ENCODE measurements at regions of chr9 and their contacts with region 1.

Region 1: GRCh38 chr9:127916665-127917613 is at the start of gene ST6GALNAC4:
- DNase-seq: peak; percentile 93 to 96
- ATAC-seq: peak; percentile 97 to 99 (median 98)
- H3K4me3 ChIP-seq: peak within 1 kb of the TSS; percentile 84
- H3K4me3 Mint-ChIP-seq: peak within 1 kb of the TSS; percentile 79
- H3K27ac ChIP-seq: peak within 1 kb of the TSS; percentile 76
- H3K27ac Mint-ChIP-seq: peak within 1 kb of the TSS in 1 of 2 donors; percentile 74
- H3K4me1 ChIP-seq: peaks cover 62% of the 10 kb centered on the region
- H3K4me1 Mint-ChIP-seq: peaks cover 15 to 40% of the 10 kb centered on the region in 2 donors
- H3K27me3 ChIP-seq: no peaks in the 10 kb centered on the region
- H3K27me3 Mint-ChIP-seq: no peaks in the 10 kb centered on the region
- CTCF ChIP-seq: no peak
- total RNA-seq, gene ST6GALNAC4: 18.8 to 33.0 (median 20.4) TPM

Region 2: GRCh38 chr9:127224178-127224882 is 692.6 kb before region 1 on chr9:
- intact Hi-C with region 1: loop called (anchors 10 kb)
- DNase-seq: peak; percentile 88 to 90
- ATAC-seq: peak; percentile 75 to 88 (median 77)
- H3K4me3 ChIP-seq: peak overlapping the region; percentile 65
- H3K4me3 Mint-ChIP-seq: peak overlapping the region; percentile 88
- H3K27ac ChIP-seq: peak overlapping the region; percentile 55
- H3K27ac Mint-ChIP-seq: peak overlapping the region; percentile 81 to 98
- H3K4me1 ChIP-seq: peaks cover 22% of the 10 kb centered on the region
- H3K4me1 Mint-ChIP-seq: peaks cover 15 to 32% of the 10 kb centered on the region in 2 donors
- H3K27me3 ChIP-seq: peaks cover 2% of the 10 kb centered on the region
- H3K27me3 Mint-ChIP-seq: peaks cover 6 to 14% of the 10 kb centered on the region in 2 donors
- CTCF ChIP-seq: no peak

Region 3: DNA sequence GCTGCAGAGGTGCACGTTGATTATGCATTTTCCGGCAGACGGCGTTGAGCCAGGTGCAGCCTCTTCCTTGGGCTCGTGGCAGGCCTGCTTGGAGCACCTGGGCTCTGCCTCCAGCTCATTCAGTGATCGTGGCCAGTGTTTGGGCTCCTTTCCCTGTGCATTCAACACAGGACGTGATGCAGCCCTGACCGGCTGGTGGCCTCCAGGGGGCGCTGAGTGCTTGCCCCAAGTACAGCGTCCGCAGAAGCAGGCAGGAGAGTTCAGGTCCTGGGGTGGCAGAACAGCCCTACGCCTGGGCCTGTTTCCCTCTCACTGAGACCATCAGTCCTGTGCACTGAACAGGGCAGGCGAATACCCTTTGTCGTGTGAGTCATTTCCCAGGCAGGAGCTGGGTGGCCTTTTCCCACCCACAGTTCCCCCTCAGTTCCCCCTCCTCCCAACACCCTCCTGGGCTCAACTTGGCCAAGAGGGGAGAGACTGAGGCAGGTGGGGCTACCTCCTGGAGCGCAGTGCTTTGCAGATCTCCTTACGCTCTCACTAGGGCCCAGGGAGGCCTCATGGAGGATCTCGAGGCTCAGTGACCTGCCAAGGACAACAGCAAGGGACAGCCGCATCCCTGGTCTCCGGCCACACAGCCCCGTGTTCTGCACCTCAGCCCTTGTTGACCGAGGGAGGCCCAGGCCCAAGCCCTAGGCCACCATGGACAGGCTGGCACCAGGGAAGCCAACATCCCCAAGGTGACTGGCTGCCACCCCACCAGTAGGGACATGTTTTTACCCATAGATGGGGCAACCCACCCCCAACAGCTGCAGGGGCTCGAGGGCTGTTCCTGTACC is 412.8 kb before region 1 on chr9:
- intact Hi-C with region 1: loop called (anchors 1 kb)
- DNase-seq: peak; percentile 78 to 89
- ATAC-seq: peak; percentile 76 to 98 (median 88)
- H3K4me3 ChIP-seq: no peak overlapping the region
- H3K4me3 Mint-ChIP-seq: no peak overlapping the region
- H3K27ac ChIP-seq: no peak overlapping the region
- H3K27ac Mint-ChIP-seq: no peak overlapping the region
- H3K4me1 ChIP-seq: no peaks in the 10 kb centered on the region
- H3K4me1 Mint-ChIP-seq: no peaks in the 10 kb centered on the region
- H3K27me3 ChIP-seq: no peaks in the 10 kb centered on the region
- H3K27me3 Mint-ChIP-seq: no peaks in the 10 kb centered on the region
- CTCF ChIP-seq: peak; percentile 79

Region 4: GRCh38 chr9:127802576-127803443 is 114.1 kb before region 1 on chr9 and contains the start of gene FPGS:
- intact Hi-C with region 1: loop called (anchors 2 kb)
- DNase-seq: peak; percentile 78 to 92
- ATAC-seq: peak; percentile 81 to 95 (median 86)
- H3K4me3 ChIP-seq: peak within 1 kb of the TSS; percentile 97
- H3K4me3 Mint-ChIP-seq: peak within 1 kb of the TSS; percentile 91
- H3K27ac ChIP-seq: peak within 1 kb of the TSS; percentile 90
- H3K27ac Mint-ChIP-seq: peak within 1 kb of the TSS; percentile 84 to 94
- H3K4me1 ChIP-seq: peaks cover 29% of the 10 kb centered on the region
- H3K4me1 Mint-ChIP-seq: peaks cover 18 to 30% of the 10 kb centered on the region in 2 donors
- H3K27me3 ChIP-seq: no peaks in the 10 kb centered on the region
- H3K27me3 Mint-ChIP-seq: no peaks in the 10 kb centered on the region
- CTCF ChIP-seq: no peak
- total RNA-seq, gene FPGS: 99.1 to 108 (median 107) TPM

Region 5: DNA sequence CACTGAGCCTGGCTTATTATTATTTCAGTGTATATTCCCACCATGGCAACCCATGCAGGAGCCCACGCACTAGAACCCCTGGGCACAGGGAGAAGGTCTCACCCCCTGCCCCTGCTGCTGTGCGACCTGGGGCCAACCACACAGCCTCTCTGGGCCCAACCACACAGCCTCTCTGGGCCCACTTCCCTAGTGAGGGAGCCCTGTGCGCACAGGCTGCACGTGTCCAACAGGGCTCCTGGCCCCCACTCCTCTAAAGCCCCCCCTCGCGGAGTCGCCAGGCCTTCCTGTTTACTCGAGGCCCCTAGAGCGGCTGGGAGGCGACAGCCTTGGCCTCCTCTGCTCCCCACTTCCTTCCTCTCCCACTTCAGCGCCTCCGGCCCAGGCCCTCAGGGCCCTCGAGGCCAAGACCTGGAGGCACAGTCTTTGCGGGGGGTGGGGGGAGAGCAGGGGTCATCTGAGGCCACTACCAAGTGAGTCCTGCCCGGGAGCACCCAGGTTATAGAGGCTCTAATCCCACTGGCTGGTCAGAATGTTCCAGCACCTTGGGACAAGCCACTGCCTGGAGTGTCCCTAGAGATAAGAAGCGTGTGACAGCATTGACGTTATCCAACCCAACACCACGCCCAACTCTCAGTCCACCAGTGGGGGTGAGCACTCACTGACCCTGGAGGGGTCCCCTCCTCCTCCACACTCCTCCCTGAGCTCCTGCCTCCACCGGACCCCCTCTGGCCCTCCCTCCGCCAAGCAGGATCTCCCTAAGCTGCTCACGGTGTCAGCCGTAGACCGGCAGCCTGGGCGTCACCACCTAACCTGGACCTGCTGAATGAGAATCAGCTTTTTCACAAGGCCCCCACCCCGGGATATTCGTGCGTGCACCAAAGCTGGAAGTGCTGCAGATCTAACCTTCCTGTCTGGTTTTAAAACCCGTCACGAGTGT is 54.6 kb before region 1 on chr9:
- intact Hi-C with region 1: loop called (anchors 5 kb)
- DNase-seq: peak; percentile 63 to 68
- ATAC-seq: peak; percentile 78 to 93 (median 82)
- H3K4me3 ChIP-seq: no peak overlapping the region
- H3K4me3 Mint-ChIP-seq: peak overlapping the region; percentile 49
- H3K27ac ChIP-seq: peak overlapping the region; percentile 87
- H3K27ac Mint-ChIP-seq: peak overlapping the region; percentile 85 to 96
- H3K4me1 ChIP-seq: peaks cover 75% of the 10 kb centered on the region
- H3K4me1 Mint-ChIP-seq: peaks cover 19 to 55% of the 10 kb centered on the region in 2 donors
- H3K27me3 ChIP-seq: no peaks in the 10 kb centered on the region
- H3K27me3 Mint-ChIP-seq: no peaks in the 10 kb centered on the region
- CTCF ChIP-seq: no peak

Region 6: DNA sequence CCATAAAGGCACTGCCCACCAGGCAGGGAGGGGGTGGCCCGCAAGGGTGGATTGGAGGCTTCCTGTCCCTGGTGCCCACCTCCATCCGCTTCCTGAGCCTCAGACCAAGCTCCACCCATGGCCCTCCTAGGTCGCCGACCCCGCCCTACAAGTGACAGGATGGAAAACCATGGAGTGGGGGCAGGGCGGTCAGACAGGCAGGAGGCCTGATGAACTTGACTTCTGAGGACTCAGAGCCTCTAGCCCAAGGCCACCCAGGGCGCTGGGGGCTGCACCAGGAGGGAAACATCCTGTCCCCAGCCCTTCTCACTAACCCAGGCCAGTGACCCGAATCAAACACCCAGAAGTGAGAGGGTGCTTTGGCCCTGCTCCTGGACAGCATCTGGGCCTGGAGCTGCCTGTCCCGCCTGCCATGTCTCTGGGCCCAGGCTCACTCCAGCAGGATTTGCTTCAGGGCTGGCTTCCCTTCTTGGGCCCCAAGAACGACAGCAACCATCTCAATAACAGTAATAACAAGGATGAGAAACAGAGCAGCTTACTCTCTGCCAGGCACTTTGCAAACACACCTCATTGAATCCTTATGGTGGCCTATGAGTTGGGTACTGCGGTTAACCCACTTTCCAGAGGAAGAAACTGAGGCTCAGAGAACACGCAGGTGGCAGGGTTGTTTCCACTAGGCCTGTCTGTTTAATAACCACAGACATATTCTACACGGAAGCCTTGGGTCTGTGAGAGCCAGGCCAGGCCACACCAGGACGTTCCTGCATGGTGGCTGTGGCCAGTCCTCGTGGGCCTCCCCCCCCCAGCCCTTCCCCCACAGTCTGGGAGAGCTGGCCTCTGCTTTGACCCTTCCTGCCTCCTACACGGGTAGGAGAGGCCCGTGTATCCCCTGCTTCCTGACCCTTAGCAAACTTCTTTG is 13.1 kb before region 1 on chr9:
- intact Hi-C with region 1: loop called (anchors 1 kb)
- DNase-seq: peak; percentile 54 to 69
- ATAC-seq: peak in 2 of 3 donors; percentile 0 to 2
- H3K4me3 ChIP-seq: peak overlapping the region; percentile 54
- H3K4me3 Mint-ChIP-seq: peak overlapping the region; percentile 99
- H3K27ac ChIP-seq: peak overlapping the region; percentile 96
- H3K27ac Mint-ChIP-seq: peak overlapping the region; percentile 100
- H3K4me1 ChIP-seq: peaks cover 82% of the 10 kb centered on the region
- H3K4me1 Mint-ChIP-seq: peaks cover 33 to 51% of the 10 kb centered on the region in 2 donors
- H3K27me3 ChIP-seq: no peaks in the 10 kb centered on the region
- H3K27me3 Mint-ChIP-seq: no peaks in the 10 kb centered on the region
- CTCF ChIP-seq: no peak

Region 7: GRCh38 chr9:128175102-128175563 is 258.2 kb after region 1 on chr9:
- intact Hi-C with region 1: no loop called
- DNase-seq: no peak
- ATAC-seq: no peak
- H3K4me3 ChIP-seq: no peak overlapping the region
- H3K4me3 Mint-ChIP-seq: no peak overlapping the region
- H3K27ac ChIP-seq: no peak overlapping the region
- H3K27ac Mint-ChIP-seq: no peak overlapping the region
- H3K4me1 ChIP-seq: no peaks in the 10 kb centered on the region
- H3K4me1 Mint-ChIP-seq: no peaks in the 10 kb centered on the region
- H3K27me3 ChIP-seq: no peaks in the 10 kb centered on the region
- H3K27me3 Mint-ChIP-seq: no peaks in the 10 kb centered on the region
- CTCF ChIP-seq: no peak

Measured in natural killer cell (primary cell).